Prostate gland (tissue), 2 donors: ENCODE measurements at regions of chr16 and their contacts with region 1.

Region 1: GRCh38 chr16:19393226-19394074 is 24.2 kb upstream of the TMC5 start:
- DNase-seq: peak; percentile 59
- H3K4me3 ChIP-seq: no peak overlapping the region
- H3K27ac ChIP-seq: peak overlapping the region; percentile 76 to 81
- H3K4me1 ChIP-seq: peaks cover 12% of the 10 kb centered on the region
- H3K27me3 ChIP-seq: no peaks in the 10 kb centered on the region
- CTCF ChIP-seq: no peak
- POLR2A ChIP-seq: no peak

Region 2: DNA sequence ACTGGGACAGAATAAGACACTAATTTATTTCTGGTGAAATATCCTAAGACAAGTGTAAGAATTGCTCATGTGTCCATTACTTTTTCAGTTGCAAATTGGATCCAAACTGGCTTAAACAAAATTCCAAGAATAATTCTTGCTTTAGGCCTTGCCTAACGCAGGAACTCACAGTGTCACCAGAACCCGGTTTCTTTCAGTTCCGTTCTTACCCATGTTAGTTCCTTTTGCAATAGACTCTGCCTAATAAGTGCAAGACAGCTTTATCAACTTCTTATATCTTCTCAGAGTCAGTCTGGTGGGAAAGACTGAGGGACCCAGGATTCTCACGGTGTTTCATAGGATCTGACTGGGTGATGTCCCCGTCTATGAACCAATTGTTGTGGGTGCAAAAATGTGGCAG is 103.7 kb after region 1 on chr16:
- intact Hi-C with region 1: loop called (anchors 10 kb)
- DNase-seq: no peak
- H3K4me3 ChIP-seq: no peak overlapping the region
- H3K27ac ChIP-seq: no peak overlapping the region
- H3K4me1 ChIP-seq: no peaks in the 10 kb centered on the region
- H3K27me3 ChIP-seq: no peaks in the 10 kb centered on the region
- CTCF ChIP-seq: no peak
- POLR2A ChIP-seq: no peak